ENCODE measurements at regions of chr18 and their contacts with region 1.

Region 1: DNA sequence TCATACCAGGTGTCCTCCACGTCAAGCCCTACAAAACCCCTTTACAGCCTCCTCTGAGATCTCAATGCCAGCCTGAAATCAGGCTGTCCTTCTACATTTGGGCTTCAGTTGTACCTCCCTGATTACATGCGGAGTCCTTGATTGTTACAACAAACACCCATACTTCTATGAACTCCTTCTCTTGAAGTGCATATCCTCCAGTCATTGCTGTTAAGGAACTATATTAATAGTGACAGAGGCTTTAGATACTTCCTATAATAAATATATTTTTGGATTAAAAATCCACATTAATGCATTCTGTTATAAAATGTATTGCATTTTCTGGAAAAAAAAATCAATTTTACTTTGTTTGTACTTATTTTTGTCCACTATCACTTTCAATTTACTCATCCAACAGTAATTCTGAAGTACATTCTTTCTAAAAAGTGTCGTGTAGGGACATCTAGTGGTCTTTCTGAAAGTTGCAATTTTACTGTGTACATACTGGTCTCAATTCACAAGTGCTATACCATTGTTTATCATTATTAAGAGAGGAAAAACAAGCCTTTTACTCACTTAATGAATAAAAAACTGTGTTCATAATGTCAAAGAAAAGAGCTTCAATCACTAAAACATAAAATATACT is 316.4 kb downstream of the DSEL start:
- DNase-seq: no peak
- ATAC-seq: peak; percentile 89 to 98 (median 92)
- H3K4me3 ChIP-seq: no peak overlapping the region
- H3K27ac ChIP-seq: no peak overlapping the region
- H3K4me1 ChIP-seq: no peaks in the 10 kb centered on the region
- H3K27me3 ChIP-seq: no peaks in the 10 kb centered on the region
- CTCF ChIP-seq: peak; percentile 67 to 80 (median 74)
- POLR2A ChIP-seq: no peak

Region 2: GRCh38 chr18:66931010-66931409 is 269.1 kb before region 1 on chr18:
- intact Hi-C with region 1: no loop called
- DNase-seq: no peak
- ATAC-seq: no peak
- H3K4me3 ChIP-seq: no peak overlapping the region
- H3K27ac ChIP-seq: no peak overlapping the region
- H3K4me1 ChIP-seq: no peaks in the 10 kb centered on the region
- H3K27me3 ChIP-seq: no peaks in the 10 kb centered on the region
- CTCF ChIP-seq: no peak
- POLR2A ChIP-seq: no peak

Region 3: GRCh38 chr18:67104700-67105284 is 95.3 kb before region 1 on chr18:
- intact Hi-C with region 1: loop called in 1 of 2 experiments (anchors 10 kb)
- DNase-seq: peak; percentile 65 to 79 (median 68)
- ATAC-seq: peak; percentile 98 to 100 (median 100)
- H3K4me3 ChIP-seq: no peak overlapping the region
- H3K27ac ChIP-seq: no peak overlapping the region
- H3K4me1 ChIP-seq: peaks cover 0 to 10% (median 0%) of the 10 kb centered on the region in 4 donors
- H3K27me3 ChIP-seq: no peaks in the 10 kb centered on the region
- CTCF ChIP-seq: peak; percentile 71 to 86 (median 83)
- POLR2A ChIP-seq: no peak